ENCODE measurements at regions of chr3 and their contacts with region 1.

Region 1: DNA sequence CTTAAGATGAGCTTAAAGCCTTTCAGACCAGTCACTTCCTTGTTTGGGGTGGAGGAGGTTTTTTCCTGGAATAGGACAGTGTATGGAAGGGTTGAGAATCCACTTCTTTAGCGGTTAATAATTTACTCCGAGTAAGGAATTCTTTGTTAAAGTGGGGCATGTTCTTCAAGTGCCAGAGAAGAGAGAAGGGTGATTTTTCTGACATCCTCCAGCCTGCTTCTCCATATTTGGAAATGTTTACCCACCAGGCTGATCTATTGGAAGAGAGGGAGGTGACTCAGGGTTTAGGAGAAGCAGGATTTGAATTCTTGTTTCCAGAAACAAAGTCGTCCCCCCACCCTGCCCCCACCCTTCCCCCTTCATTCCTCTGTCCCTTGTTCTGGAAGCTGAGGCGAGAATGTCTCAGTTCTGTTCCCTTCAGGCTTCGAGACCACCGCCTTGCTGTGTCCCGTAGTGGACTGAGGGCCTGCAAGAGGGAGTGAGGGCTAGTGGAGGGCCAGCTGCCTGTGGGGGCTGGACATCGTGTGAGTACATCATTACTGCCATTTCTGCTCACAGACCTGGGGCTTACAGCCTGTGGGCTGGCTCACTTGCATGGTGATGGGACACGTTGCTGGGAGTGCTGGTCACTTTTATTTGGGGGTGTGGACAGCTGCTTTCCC is 58.5 kb downstream of the LPP start:
- DNase-seq: no peak
- ATAC-seq: peak; percentile 81

Region 2: DNA sequence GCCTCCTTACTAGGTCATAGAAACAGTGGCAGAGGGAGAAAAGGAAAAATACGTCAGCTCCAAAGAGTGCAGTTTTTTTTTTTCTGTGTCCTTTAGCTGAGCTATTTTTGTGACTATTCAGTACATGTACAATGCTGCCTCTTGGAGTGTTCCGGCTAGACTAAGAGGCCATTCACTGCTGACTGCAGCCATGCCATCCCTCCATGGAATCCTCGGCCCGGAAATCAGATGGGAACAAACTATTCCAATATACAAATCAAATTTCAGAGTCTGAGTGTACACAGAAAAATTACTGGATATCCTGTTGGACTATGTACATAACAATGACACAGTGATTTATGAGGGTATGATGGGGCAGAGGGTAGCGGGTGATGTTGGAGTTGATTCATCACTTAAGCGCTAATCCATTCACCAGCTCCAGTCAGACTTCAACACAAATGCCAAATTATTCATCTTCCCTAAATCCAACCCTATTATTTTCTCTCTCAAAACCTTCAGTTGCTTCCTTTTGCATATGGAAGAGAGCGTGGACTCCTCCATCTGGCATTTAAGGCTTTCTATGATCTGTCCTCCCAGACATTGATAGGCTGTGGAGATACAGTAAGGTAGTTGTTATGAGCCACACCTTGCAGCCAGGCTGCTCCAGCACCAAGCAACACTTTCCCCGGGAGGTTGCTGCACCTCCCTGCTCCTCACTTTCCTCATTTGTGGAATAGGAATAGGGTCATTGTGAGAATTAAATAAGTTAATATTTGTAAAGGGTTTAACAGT is 50.7 kb after region 1 on chr3:
- intact Hi-C with region 1: loop called in 1 of 2 experiments (anchors 10 kb)
- DNase-seq: peak in 1 of 2 donors; percentile 49
- ATAC-seq: peak; percentile 69

Region 3: GRCh38 chr3:188749010-188749617 is 536.7 kb after region 1 on chr3:
- intact Hi-C with region 1: no loop called
- DNase-seq: peak in 1 of 2 donors; percentile 31
- ATAC-seq: peak; percentile 56